ENCODE measurements at regions of chr19 and their contacts with region 1.

Region 1: DNA sequence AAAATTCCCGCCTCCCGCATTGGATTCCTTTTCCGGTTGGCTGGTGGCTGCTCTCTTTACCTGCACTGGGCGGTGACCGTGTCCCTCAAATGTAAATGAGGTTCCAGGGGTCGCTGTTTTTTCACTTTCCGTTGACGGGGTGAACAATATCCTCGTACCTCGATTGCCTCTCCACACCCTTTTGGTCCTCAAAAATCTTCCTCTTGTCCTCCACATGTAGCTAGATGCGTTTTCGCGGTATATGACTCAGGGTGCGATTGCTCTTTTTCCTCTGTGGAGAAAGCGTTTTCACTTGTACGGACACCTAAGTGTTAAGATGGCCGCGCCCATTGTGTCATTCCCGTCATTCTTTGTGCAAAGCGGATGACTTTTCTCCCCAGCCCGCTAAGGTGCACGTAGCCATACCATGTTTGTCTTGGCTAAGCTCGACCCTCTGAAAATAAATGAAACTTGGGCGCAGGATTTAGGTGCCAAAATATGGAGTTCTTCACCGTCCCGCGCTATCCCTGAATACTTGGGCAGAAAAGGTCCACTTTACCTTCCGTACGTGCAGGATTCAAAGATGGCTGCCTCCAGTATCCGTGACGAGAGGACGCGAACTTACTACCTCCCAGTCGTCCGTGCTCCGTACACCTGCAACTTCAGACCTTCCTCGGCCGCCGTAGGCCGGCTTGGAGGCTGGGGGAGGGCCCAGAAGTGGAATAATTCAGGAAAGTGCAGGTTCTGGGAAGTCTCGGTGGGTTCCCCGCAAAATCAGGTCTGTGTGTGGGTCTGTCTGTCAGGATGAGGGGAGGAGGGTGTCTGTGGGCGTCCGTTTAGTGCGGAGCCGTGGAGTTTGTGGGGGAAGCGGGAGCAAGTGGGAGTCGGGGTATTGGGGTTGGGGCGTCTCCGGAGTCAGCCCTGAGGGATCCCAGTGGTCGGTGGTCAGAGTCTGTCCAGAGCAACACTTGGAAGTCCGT is at the start of gene ZNF613:
- DNase-seq: peak; percentile 91
- H3K4me3 Mint-ChIP-seq: peak within 1 kb of the TSS; percentile 96
- H3K27ac Mint-ChIP-seq: peak within 1 kb of the TSS; percentile 96
- H3K4me1 Mint-ChIP-seq: peaks cover 21% of the 10 kb centered on the region
- H3K27me3 Mint-ChIP-seq: no peaks in the 10 kb centered on the region
- total RNA-seq, gene ZNF613: 2.0 to 3.1 TPM

Region 2: DNA sequence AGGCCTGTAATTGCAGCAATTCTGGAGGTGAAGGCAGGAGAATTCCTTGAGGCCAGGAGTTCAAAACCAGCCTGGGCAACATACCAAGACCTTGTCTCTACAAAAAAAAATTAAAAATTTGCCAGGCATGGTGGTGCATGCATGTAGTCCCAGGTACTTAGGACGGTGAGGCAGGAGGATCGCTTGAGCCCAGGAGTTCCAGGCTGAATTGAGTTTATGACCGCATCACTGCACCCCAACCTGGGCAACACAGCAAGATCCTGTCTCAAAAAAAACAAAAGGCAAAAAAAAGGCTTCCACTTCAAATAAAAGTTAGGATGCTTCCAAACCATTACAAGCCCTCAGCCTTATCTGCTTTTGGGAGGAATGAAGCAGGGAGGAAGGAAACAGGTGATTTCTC is 44.5 kb before region 1 on chr19:
- CTCF ChIA-PET with region 1: no interaction called
- intact Hi-C with region 1: no loop called
- DNase-seq: no peak
- H3K4me3 Mint-ChIP-seq: no peak overlapping the region
- H3K27ac Mint-ChIP-seq: no peak overlapping the region
- H3K4me1 Mint-ChIP-seq: peaks cover 1% of the 10 kb centered on the region
- H3K27me3 Mint-ChIP-seq: no peaks in the 10 kb centered on the region

Region 3: DNA sequence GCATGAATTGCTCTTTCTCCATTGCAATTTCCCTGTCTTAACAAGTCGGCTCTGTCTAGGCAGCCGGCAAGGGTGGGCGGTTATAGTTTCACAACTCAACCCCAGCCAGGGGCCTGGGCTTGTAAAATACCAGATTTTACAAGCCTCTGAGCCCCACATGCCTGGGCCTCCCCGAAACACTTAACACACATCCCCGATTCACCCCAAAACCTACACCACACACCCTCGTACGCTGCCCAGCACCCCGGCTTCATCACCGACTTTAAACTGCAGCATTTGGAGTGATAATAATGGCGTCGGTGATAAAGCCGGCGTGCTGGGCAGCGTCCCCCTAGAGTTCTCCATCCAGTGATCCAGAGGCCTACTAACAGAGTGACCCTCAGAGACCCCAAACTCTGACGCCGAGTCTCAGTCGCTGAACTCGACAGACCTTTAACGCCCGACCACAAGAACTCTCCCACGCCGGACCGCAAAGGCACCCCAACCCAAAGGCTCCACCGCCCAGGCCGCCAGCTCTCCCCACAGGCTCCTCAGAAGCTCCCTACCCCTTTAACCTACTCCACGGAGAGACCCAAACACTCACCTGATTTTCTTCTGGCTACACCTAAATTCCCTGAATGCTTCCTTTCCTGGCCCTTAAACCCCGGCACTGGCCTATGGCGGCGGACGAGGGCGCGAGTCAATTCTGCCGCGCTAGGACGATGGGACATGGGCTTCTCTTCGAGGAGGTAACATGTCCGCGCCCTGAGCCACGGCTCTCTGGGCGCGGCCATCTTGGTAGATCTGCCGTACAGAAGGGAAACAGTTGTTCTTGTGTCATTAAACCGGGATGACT is 22.5 kb before region 1 on chr19 and contains the start of gene ZNF649:
- CTCF ChIA-PET with region 1: no interaction called
- intact Hi-C with region 1: loop called (anchors 1 kb)
- DNase-seq: peak; percentile 90
- H3K4me3 Mint-ChIP-seq: peak within 1 kb of the TSS; percentile 96
- H3K27ac Mint-ChIP-seq: peak within 1 kb of the TSS; percentile 98
- H3K4me1 Mint-ChIP-seq: peaks cover 19% of the 10 kb centered on the region
- H3K27me3 Mint-ChIP-seq: peaks cover 22% of the 10 kb centered on the region
- total RNA-seq, gene ZNF649: 10.4 to 11.6 TPM

Region 4: GRCh38 chr19:52007806-52008557 is 80.9 kb after region 1 on chr19 and contains the start of gene ZNF615:
- CTCF ChIA-PET with region 1: no interaction called
- intact Hi-C with region 1: loop called (anchors 1 kb)
- DNase-seq: peak; percentile 91
- H3K4me3 Mint-ChIP-seq: peak within 1 kb of the TSS; percentile 88
- H3K27ac Mint-ChIP-seq: peak within 1 kb of the TSS; percentile 97
- H3K4me1 Mint-ChIP-seq: peaks cover 12% of the 10 kb centered on the region
- H3K27me3 Mint-ChIP-seq: no peaks in the 10 kb centered on the region
- total RNA-seq, gene ZNF615: 6.8 to 7.9 TPM

Region 5: DNA sequence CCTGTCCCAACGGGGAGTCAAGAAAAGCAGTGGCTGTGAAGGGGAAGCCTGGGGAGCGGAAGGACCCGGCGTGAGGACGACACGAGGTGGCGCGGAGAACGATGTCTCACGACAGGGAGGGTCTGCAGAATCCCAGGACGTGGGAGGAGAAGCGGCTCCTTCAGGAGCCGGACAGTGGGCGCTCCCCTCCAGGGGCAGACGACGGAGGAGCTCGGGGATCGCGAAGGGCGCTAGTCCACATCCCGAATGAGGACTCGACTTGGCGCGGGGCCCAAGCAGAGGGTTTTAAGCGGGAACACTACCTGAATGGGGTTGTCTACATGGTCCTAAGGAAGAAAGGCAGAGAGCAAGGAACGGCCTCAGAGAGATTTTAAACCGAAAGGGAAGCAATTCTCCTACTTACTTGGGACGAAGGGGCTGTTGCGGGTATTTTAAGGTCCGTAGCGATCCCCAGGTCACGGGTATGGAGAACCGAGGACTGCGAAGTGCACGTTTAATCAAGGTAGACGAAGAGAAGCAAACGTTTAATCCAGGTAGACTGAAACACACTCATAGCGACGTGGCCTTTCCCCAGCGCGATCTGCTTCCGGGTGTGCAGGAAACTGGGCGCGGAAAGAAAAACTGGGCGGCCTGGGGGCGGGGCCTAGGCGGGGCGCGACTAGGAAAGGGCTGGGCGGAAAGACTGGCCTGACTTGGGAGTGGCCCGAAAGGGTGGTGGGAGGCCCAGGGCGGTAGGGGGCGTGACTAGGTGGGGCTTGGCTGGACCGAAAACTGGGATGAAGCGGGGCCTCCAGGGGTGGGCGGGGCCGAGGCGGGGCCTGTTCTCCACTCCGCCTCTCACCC is 168.3 kb after region 1 on chr19 and contains the start of gene ZNF841:
- CTCF ChIA-PET with region 1: interaction called, 3 read pairs
- intact Hi-C with region 1: loop called (anchors 2 kb)
- DNase-seq: peak; percentile 94
- H3K4me3 Mint-ChIP-seq: peak within 1 kb of the TSS; percentile 91
- H3K27ac Mint-ChIP-seq: peak within 1 kb of the TSS; percentile 93
- H3K4me1 Mint-ChIP-seq: peaks cover 19% of the 10 kb centered on the region
- H3K27me3 Mint-ChIP-seq: no peaks in the 10 kb centered on the region
- total RNA-seq, gene ZNF841: 13.3 to 15.5 TPM